Aorta (tissue), 5 donors: ENCODE measurements at regions of chr15 and their contacts with region 1.

Region 1: GRCh38 chr15:35519541-35520149 is 26.3 kb downstream of the DPH6 start:
- DNase-seq: no peak
- ATAC-seq: peak; percentile 81
- H3K4me3 ChIP-seq: no peak overlapping the region
- H3K27ac ChIP-seq: no peak overlapping the region
- H3K4me1 ChIP-seq: no peaks in the 10 kb centered on the region
- H3K27me3 ChIP-seq: no peaks in the 10 kb centered on the region

Region 2: DNA sequence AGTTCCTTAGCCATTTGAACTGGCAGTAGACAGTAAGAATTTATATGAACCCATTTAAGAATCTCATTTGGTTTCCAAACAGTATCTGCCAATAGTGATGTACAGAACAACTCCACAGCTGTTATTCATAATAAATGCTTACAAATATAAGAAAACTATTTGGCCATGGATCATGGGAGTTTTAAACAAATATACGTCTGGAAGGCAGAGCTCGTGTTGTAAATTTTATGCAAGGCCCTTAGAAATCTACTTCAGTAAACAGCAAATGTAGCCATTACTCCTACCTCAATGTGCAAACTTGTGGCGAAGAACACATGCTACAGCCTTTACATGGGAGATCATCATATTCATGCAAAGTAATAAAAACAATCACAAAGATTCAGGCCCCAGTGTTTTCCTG is 369.3 kb before region 1 on chr15:
- intact Hi-C with region 1: no loop called
- DNase-seq: no peak
- ATAC-seq: no peak
- H3K4me3 ChIP-seq: no peak overlapping the region
- H3K27ac ChIP-seq: no peak overlapping the region
- H3K4me1 ChIP-seq: no peaks in the 10 kb centered on the region
- H3K27me3 ChIP-seq: no peaks in the 10 kb centered on the region

Region 3: GRCh38 chr15:35289024-35289617 is 230.5 kb before region 1 on chr15:
- intact Hi-C with region 1: loop called in 1 of 2 experiments (anchors 10 kb)
- DNase-seq: no peak
- ATAC-seq: peak; percentile 65
- H3K4me3 ChIP-seq: no peak overlapping the region
- H3K27ac ChIP-seq: no peak overlapping the region
- H3K4me1 ChIP-seq: no peaks in the 10 kb centered on the region
- H3K27me3 ChIP-seq: no peaks in the 10 kb centered on the region

Region 4: DNA sequence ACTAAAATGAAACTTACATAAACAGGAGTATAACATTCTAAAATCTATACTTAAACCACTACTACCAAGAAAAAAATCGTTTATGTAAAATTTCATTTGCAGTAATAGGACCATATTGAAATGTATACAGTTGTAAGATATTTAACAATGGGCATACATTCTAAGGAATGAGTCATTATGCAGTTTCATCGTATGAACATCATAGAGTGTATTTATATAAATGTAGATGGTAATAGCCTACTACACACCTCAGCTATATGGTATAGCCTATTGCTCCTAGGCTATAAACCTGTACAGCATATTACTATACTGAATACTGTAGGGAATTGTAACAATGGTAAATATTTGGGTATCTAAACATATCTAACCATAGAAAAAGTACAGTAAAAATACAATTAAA is 53.2 kb before region 1 on chr15:
- intact Hi-C with region 1: no loop called
- DNase-seq: no peak
- ATAC-seq: no peak
- H3K4me3 ChIP-seq: no peak overlapping the region
- H3K27ac ChIP-seq: no peak overlapping the region
- H3K4me1 ChIP-seq: no peaks in the 10 kb centered on the region
- H3K27me3 ChIP-seq: no peaks in the 10 kb centered on the region

Region 5: GRCh38 chr15:35697549-35698299 is 178.1 kb after region 1 on chr15:
- intact Hi-C with region 1: loop called in 1 of 2 experiments (anchors 10 kb)
- DNase-seq: no peak
- ATAC-seq: peak; percentile 50
- H3K4me3 ChIP-seq: no peak overlapping the region
- H3K27ac ChIP-seq: peak overlapping the region; percentile 36 to 54
- H3K4me1 ChIP-seq: peaks cover 3 to 4% of the 10 kb centered on the region in 2 donors
- H3K27me3 ChIP-seq: no peaks in the 10 kb centered on the region

Region 6: GRCh38 chr15:36501063-36501678 is 981.5 kb after region 1 on chr15:
- intact Hi-C with region 1: loop called in 1 of 2 experiments (anchors 10 kb)
- DNase-seq: no peak
- ATAC-seq: peak; percentile 74
- H3K4me3 ChIP-seq: no peak overlapping the region
- H3K27ac ChIP-seq: peak overlapping the region in 1 of 2 donors; percentile 43
- H3K4me1 ChIP-seq: no peaks in the 10 kb centered on the region
- H3K27me3 ChIP-seq: no peaks in the 10 kb centered on the region

Region 7: GRCh38 chr15:37100109-37100965 is 1580.7 kb after region 1 on chr15 and contains the start of gene MEIS2:
- intact Hi-C with region 1: loop called in 1 of 2 experiments (anchors 10 kb)
- DNase-seq: peak; percentile 92 to 97
- ATAC-seq: peak; percentile 86
- H3K4me3 ChIP-seq: peak within 1 kb of the TSS; percentile 79 to 99
- H3K27ac ChIP-seq: peak within 1 kb of the TSS; percentile 77 to 100
- H3K4me1 ChIP-seq: no peaks in the 10 kb centered on the region
- H3K27me3 ChIP-seq: no peaks in the 10 kb centered on the region
- total RNA-seq, gene MEIS2: 29.1 to 58.7 TPM